Heart left ventricle (tissue), 16 donors: ENCODE measurements at regions of chr17 and their contacts with region 1.

Region 1: GRCh38 chr17:18025945-18026776 is 12.8 kb downstream of the ATPAF2 start:
- DNase-seq: peak; percentile 49 to 80 (median 71)
- ATAC-seq: peak in 3 of 4 donors; percentile 75 to 87 (median 80)
- H3K4me3 ChIP-seq: no peak overlapping the region
- H3K27ac ChIP-seq: peak overlapping the region in 6 of 12 donors; percentile 19 to 91 (median 84)
- H3K4me1 ChIP-seq: peaks cover 0 to 42% (median 14%) of the 10 kb centered on the region in 12 donors
- H3K27me3 ChIP-seq: no peaks in the 10 kb centered on the region
- CTCF ChIP-seq: no peak
- POLR2A ChIP-seq: no peak

Region 2: DNA sequence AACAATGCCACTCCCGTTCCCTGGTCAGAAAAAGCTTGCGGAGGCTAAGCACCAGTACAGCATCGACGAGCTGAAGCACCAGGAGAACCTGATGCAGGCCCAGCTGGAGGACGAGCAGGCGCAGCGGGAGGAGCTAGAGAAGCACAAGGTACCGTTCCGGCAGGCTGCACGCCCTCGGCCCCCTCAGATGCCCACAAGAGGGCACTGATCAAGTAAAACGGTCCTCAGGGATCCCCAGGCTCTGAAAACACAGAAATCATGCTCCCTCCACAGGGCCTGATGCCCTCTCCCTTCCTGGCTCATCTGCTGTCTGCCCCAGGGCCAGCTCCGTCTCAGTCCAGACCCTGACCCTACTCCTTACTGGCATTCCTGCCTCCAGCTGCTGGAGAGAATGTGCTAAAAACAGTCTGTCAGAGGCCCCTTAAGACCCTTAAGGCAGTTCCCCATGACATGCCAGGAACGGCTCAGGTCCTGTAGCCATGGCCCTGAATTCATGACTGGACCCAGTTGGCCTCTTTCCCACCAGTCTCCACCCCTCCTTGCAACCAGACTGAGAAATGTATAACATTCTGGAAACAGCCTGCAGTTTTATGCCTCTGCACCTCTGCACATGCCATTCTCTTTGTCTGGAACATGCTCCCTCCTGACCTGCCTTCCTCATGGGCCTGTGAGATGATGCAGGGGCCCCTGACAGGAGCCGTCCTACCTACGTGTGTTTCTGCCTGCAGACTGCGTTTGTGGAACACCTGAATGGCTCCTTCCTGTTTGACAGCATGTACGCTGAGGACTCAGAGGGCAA is 31.7 kb before region 1 on chr17:
- intact Hi-C with region 1: loop called in 3 of 10 experiments (anchors 5 kb)
- DNase-seq: peak in 3 of 5 donors; percentile 32 to 62 (median 36)
- ATAC-seq: peak; percentile 55 to 83 (median 75)
- H3K4me3 ChIP-seq: no peak overlapping the region
- H3K27ac ChIP-seq: no peak overlapping the region
- H3K4me1 ChIP-seq: peaks cover 0 to 8% (median 0%) of the 10 kb centered on the region in 12 donors
- H3K27me3 ChIP-seq: no peaks in the 10 kb centered on the region
- CTCF ChIP-seq: peak in 11 of 12 donors; percentile 26 to 62 (median 46)
- POLR2A ChIP-seq: no peak

Region 3: GRCh38 chr17:18015593-18015992 is 10.6 kb before region 1 on chr17:
- intact Hi-C with region 1: loop called in 1 of 10 experiments (anchors 2 kb)
- DNase-seq: no peak
- ATAC-seq: no peak
- H3K4me3 ChIP-seq: no peak overlapping the region
- H3K27ac ChIP-seq: no peak overlapping the region
- H3K4me1 ChIP-seq: peaks cover 0 to 30% (median 18%) of the 10 kb centered on the region in 12 donors
- H3K27me3 ChIP-seq: no peaks in the 10 kb centered on the region
- CTCF ChIP-seq: no peak
- POLR2A ChIP-seq: no peak